ENCODE measurements at regions of chr20 and their contacts with region 1.

Region 1: GRCh38 chr20:41631826-41632225 is 13.6 kb upstream of the CHD6 start:
- DNase-seq: no peak
- ATAC-seq: no peak
- H3K4me3 ChIP-seq: no peak overlapping the region
- H3K4me3 Mint-ChIP-seq: no peak overlapping the region
- H3K27ac ChIP-seq: no peak overlapping the region
- H3K27ac Mint-ChIP-seq: no peak overlapping the region
- H3K4me1 ChIP-seq: no peaks in the 10 kb centered on the region
- H3K4me1 Mint-ChIP-seq: peaks cover 0 to 2% (median 0%) of the 10 kb centered on the region in 3 donors
- H3K27me3 ChIP-seq: peaks cover 3% of the 10 kb centered on the region in 2 experiments
- H3K27me3 Mint-ChIP-seq: peaks cover 3 to 6% of the 10 kb centered on the region in 2 donors

Region 2: GRCh38 chr20:40851051-40851450 is 780.8 kb before region 1 on chr20:
- CTCF ChIA-PET with region 1: no interaction called
- POLR2A ChIA-PET with region 1: no interaction called
- DNase-seq: no peak
- ATAC-seq: no peak
- H3K4me3 ChIP-seq: no peak overlapping the region
- H3K4me3 Mint-ChIP-seq: no peak overlapping the region
- H3K27ac ChIP-seq: no peak overlapping the region
- H3K27ac Mint-ChIP-seq: no peak overlapping the region
- H3K4me1 ChIP-seq: no peaks in the 10 kb centered on the region
- H3K4me1 Mint-ChIP-seq: peaks cover 0 to 2% (median 0%) of the 10 kb centered on the region in 3 donors
- H3K27me3 ChIP-seq: no peaks in the 10 kb centered on the region
- H3K27me3 Mint-ChIP-seq: no peaks in the 10 kb centered on the region

Region 3: GRCh38 chr20:41513829-41514228 is 118.0 kb before region 1 on chr20:
- CTCF ChIA-PET with region 1: no interaction called
- POLR2A ChIA-PET with region 1: interaction called in 1 of 2 experiments, 11 read pairs
- DNase-seq: no peak
- ATAC-seq: no peak
- H3K4me3 ChIP-seq: no peak overlapping the region
- H3K4me3 Mint-ChIP-seq: no peak overlapping the region
- H3K27ac ChIP-seq: no peak overlapping the region
- H3K27ac Mint-ChIP-seq: no peak overlapping the region
- H3K4me1 ChIP-seq: no peaks in the 10 kb centered on the region
- H3K4me1 Mint-ChIP-seq: peaks cover 27 to 62% (median 49%) of the 10 kb centered on the region in 3 donors
- H3K27me3 ChIP-seq: no peaks in the 10 kb centered on the region
- H3K27me3 Mint-ChIP-seq: no peaks in the 10 kb centered on the region

Region 4: GRCh38 chr20:41643504-41643938 is 11.7 kb after region 1 on chr20:
- CTCF ChIA-PET with region 1: no interaction called
- POLR2A ChIA-PET with region 1: interaction called in 1 of 2 experiments, 16 read pairs
- DNase-seq: no peak
- ATAC-seq: no peak
- H3K4me3 ChIP-seq: no peak overlapping the region
- H3K4me3 Mint-ChIP-seq: no peak overlapping the region
- H3K27ac ChIP-seq: no peak overlapping the region
- H3K27ac Mint-ChIP-seq: no peak overlapping the region
- H3K4me1 ChIP-seq: no peaks in the 10 kb centered on the region
- H3K4me1 Mint-ChIP-seq: peaks cover 0 to 6% (median 0%) of the 10 kb centered on the region in 3 donors
- H3K27me3 ChIP-seq: peaks cover 3 to 9% of the 10 kb centered on the region in 2 experiments
- H3K27me3 Mint-ChIP-seq: peaks cover 24 to 30% of the 10 kb centered on the region in 2 donors

Measured in T-cell (primary cell).